B cell (primary cell): ENCODE measurements at regions of chr1 and their contacts with region 1.

Region 1: GRCh38 chr1:109886827-109887226 is 23.8 kb upstream of the CSF1 start:
- DNase-seq: peak; percentile 83
- ATAC-seq: peak; percentile 89
- H3K4me3 ChIP-seq: peak overlapping the region in 3 of 5 experiments; percentile 16 to 49 (median 17)
- H3K4me3 Mint-ChIP-seq: peak overlapping the region; percentile 70
- H3K27ac ChIP-seq: peak overlapping the region; percentile 74
- H3K27ac Mint-ChIP-seq: peak overlapping the region; percentile 93
- H3K4me1 ChIP-seq: peaks cover 34 to 41% of the 10 kb centered on the region in 2 donors
- H3K4me1 Mint-ChIP-seq: peaks cover 55% of the 10 kb centered on the region
- H3K27me3 ChIP-seq: peaks cover 0 to 15% (median 0%) of the 10 kb centered on the region in 4 experiments
- H3K27me3 Mint-ChIP-seq: peaks cover 7% of the 10 kb centered on the region
- CTCF ChIP-seq: no peak

Region 2: GRCh38 chr1:109947582-109948286 is 60.9 kb after region 1 on chr1:
- CTCF ChIA-PET with region 1: no interaction called
- POLR2A ChIA-PET with region 1: interaction called, 10 read pairs
- intact Hi-C with region 1: no loop called
- DNase-seq: no peak
- ATAC-seq: no peak
- H3K4me3 ChIP-seq: no peak overlapping the region
- H3K4me3 Mint-ChIP-seq: no peak overlapping the region
- H3K27ac ChIP-seq: no peak overlapping the region
- H3K27ac Mint-ChIP-seq: no peak overlapping the region
- H3K4me1 ChIP-seq: no peaks in the 10 kb centered on the region
- H3K4me1 Mint-ChIP-seq: no peaks in the 10 kb centered on the region
- H3K27me3 ChIP-seq: no peaks in the 10 kb centered on the region
- H3K27me3 Mint-ChIP-seq: peaks cover 29% of the 10 kb centered on the region
- CTCF ChIP-seq: no peak

Region 3: GRCh38 chr1:110380672-110381283 is 494.0 kb after region 1 on chr1:
- CTCF ChIA-PET with region 1: no interaction called
- POLR2A ChIA-PET with region 1: no interaction called
- intact Hi-C with region 1: no loop called
- DNase-seq: peak; percentile 54
- ATAC-seq: peak; percentile 13
- H3K4me3 ChIP-seq: peak overlapping the region in 3 of 5 experiments; percentile 27 to 54 (median 30)
- H3K4me3 Mint-ChIP-seq: peak overlapping the region; percentile 77
- H3K27ac ChIP-seq: peak overlapping the region; percentile 56 to 70
- H3K27ac Mint-ChIP-seq: peak overlapping the region; percentile 91
- H3K4me1 ChIP-seq: peaks cover 56 to 64% of the 10 kb centered on the region in 2 donors
- H3K4me1 Mint-ChIP-seq: peaks cover 64% of the 10 kb centered on the region
- H3K27me3 ChIP-seq: no peaks in the 10 kb centered on the region
- H3K27me3 Mint-ChIP-seq: no peaks in the 10 kb centered on the region
- CTCF ChIP-seq: no peak